ENCODE measurements at regions of chr2 and their contacts with region 1.

Region 1: GRCh38 chr2:47631792-47632398 is 151.1 kb upstream of the MSH6 start:
- DNase-seq: peak; percentile 81
- H3K4me3 Mint-ChIP-seq: no peak overlapping the region
- H3K27ac Mint-ChIP-seq: no peak overlapping the region
- H3K4me1 Mint-ChIP-seq: peaks cover 19% of the 10 kb centered on the region
- H3K27me3 Mint-ChIP-seq: no peaks in the 10 kb centered on the region
- CTCF ChIP-seq: no peak

Region 2: DNA sequence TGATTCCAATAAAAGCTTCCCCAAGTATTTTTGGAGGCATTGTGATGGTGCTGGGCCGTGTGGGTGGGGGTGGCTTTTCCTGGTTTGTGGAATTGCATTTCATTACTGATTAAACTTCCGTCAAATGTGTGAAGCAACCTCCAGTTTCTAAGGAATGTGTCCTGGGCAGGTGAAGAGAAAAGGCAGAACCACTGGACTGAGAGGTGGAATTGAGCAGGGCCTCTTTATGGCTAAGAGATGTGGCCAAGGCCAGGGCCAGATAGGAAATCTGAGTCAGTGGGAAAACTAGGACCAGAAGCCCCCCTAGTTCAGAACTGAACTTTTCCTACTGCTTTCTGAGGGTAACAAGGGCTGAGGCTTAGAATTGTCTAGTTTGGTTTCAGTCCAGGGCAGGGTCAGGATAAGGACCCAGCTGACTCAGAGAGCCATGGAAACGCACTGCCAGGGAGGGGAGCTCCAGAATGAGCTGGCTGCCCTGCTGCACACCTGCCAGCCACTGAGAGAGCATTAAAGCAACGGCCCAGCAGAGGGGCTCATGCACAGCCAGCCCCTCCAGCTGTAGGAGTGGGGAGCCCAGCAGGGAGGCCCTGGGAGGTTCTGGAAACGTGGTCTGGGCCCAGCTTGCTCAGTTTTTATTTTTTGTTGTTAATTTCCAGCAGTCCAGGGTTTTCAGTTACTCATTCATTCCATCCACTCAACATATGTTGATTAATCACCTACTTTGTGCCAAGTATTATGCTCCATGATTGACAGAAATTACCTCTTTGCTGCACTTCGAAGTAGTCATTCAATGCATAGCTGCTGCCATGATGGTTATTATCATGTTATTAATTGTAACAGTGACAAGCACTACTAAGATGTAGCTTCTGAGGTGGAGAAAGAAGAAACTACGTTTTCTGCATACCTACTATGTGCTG is 72.9 kb before region 1 on chr2:
- CTCF ChIA-PET with region 1: no interaction called
- POLR2A ChIA-PET with region 1: no interaction called
- intact Hi-C with region 1: no loop called
- DNase-seq: peak; percentile 43
- H3K4me3 Mint-ChIP-seq: no peak overlapping the region
- H3K27ac Mint-ChIP-seq: no peak overlapping the region
- H3K4me1 Mint-ChIP-seq: no peaks in the 10 kb centered on the region
- H3K27me3 Mint-ChIP-seq: peaks cover 21% of the 10 kb centered on the region
- CTCF ChIP-seq: no peak

Region 3: GRCh38 chr2:47580855-47581600 is 50.9 kb before region 1 on chr2:
- CTCF ChIA-PET with region 1: no interaction called
- POLR2A ChIA-PET with region 1: no interaction called
- intact Hi-C with region 1: no loop called
- DNase-seq: no peak
- H3K4me3 Mint-ChIP-seq: no peak overlapping the region
- H3K27ac Mint-ChIP-seq: no peak overlapping the region
- H3K4me1 Mint-ChIP-seq: no peaks in the 10 kb centered on the region
- H3K27me3 Mint-ChIP-seq: peaks cover under 1% of the 10 kb centered on the region
- CTCF ChIP-seq: no peak

Region 4: GRCh38 chr2:47675196-47675825 is 43.4 kb after region 1 on chr2:
- CTCF ChIA-PET with region 1: no interaction called
- POLR2A ChIA-PET with region 1: no interaction called
- intact Hi-C with region 1: no loop called
- DNase-seq: no peak
- H3K4me3 Mint-ChIP-seq: no peak overlapping the region
- H3K27ac Mint-ChIP-seq: no peak overlapping the region
- H3K4me1 Mint-ChIP-seq: no peaks in the 10 kb centered on the region
- H3K27me3 Mint-ChIP-seq: peaks cover 6% of the 10 kb centered on the region
- CTCF ChIP-seq: no peak

Region 5: GRCh38 chr2:47751875-47752357 is 120.0 kb after region 1 on chr2:
- CTCF ChIA-PET with region 1: no interaction called
- POLR2A ChIA-PET with region 1: no interaction called
- intact Hi-C with region 1: loop called (anchors 5 kb)
- DNase-seq: no peak
- H3K4me3 Mint-ChIP-seq: no peak overlapping the region
- H3K27ac Mint-ChIP-seq: peak overlapping the region; percentile 83
- H3K4me1 Mint-ChIP-seq: peaks cover 11% of the 10 kb centered on the region
- H3K27me3 Mint-ChIP-seq: no peaks in the 10 kb centered on the region
- CTCF ChIP-seq: no peak

Measured in MCF 10A (cell line).